ENCODE measurements at regions of chr6 and their contacts with region 1.

Region 1: GRCh38 chr6:11575408-11576033 is 38.0 kb downstream of the TMEM170B start:
- DNase-seq: peak in 4 of 5 donors; percentile 39 to 43 (median 40)
- H3K4me3 ChIP-seq: no peak overlapping the region
- H3K4me3 Mint-ChIP-seq: no peak overlapping the region
- H3K27ac ChIP-seq: no peak overlapping the region
- H3K27ac Mint-ChIP-seq: no peak overlapping the region
- H3K4me1 ChIP-seq: no peaks in the 10 kb centered on the region
- H3K4me1 Mint-ChIP-seq: no peaks in the 10 kb centered on the region
- H3K27me3 ChIP-seq: no peaks in the 10 kb centered on the region
- H3K27me3 Mint-ChIP-seq: no peaks in the 10 kb centered on the region

Region 2: DNA sequence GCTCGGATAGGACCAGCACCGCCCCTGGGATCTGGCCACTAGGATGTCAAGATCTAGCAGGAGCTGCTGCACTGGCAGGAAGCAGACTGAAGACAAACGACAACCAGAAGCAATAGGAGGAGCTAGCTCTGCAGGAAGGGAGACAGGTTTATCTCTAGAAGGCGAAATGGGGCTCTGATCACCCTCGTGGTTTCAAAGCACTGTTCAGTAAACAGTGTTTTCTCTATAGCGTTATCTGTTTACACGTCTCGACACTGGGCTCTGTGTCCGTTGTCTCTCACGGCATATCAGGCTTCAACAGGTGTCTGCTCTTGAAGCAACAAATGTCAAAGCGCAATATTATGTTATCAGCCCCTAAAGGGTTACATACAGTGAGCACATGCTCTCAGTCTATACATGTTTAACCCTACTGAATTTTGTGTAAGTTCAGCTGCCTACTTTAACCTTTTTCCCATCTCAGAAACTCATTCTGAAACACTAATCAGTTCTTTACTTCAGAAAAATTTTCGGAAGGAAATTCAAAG is 804.1 kb before region 1 on chr6:
- CTCF ChIA-PET with region 1: no interaction called
- POLR2A ChIA-PET with region 1: no interaction called
- intact Hi-C with region 1: no loop called
- DNase-seq: no peak
- H3K4me3 ChIP-seq: no peak overlapping the region
- H3K4me3 Mint-ChIP-seq: no peak overlapping the region
- H3K27ac ChIP-seq: no peak overlapping the region
- H3K27ac Mint-ChIP-seq: peak overlapping the region in 3 of 7 donors; percentile 15 to 70 (median 39)
- H3K4me1 ChIP-seq: no peaks in the 10 kb centered on the region
- H3K4me1 Mint-ChIP-seq: peaks cover 0 to 1% (median 0%) of the 10 kb centered on the region in 4 donors
- H3K27me3 ChIP-seq: no peaks in the 10 kb centered on the region
- H3K27me3 Mint-ChIP-seq: no peaks in the 10 kb centered on the region

Region 3: DNA sequence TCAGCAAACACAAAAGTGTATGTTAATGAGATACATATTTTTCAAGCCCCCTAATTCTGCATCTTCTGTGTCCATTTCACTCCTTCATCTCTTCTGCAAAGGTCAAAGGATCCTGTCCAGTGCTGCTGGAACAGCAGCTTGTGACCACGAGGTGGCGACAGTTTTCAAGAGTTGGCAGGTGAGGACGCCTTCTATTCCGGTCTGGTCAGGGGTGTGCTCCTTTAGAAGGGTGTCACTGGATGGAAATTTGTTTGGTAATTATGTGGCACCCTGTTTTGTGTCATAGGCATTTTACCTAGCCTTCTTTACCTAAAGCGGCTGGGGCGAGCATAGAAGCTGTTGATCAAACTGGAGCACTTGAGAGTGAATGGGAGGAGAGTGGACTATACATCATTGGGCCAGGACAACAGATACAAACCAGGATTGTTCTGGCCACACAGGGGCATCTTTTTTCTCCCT is 431.1 kb before region 1 on chr6:
- CTCF ChIA-PET with region 1: interaction called, 11 read pairs
- POLR2A ChIA-PET with region 1: no interaction called
- intact Hi-C with region 1: loop called (anchors 1 kb)
- DNase-seq: peak; percentile 54 to 68 (median 64)
- H3K4me3 ChIP-seq: no peak overlapping the region
- H3K4me3 Mint-ChIP-seq: no peak overlapping the region
- H3K27ac ChIP-seq: no peak overlapping the region
- H3K27ac Mint-ChIP-seq: no peak overlapping the region
- H3K4me1 ChIP-seq: no peaks in the 10 kb centered on the region
- H3K4me1 Mint-ChIP-seq: peaks cover 0 to 4% (median 0%) of the 10 kb centered on the region in 4 donors
- H3K27me3 ChIP-seq: no peaks in the 10 kb centered on the region
- H3K27me3 Mint-ChIP-seq: no peaks in the 10 kb centered on the region

Region 4: DNA sequence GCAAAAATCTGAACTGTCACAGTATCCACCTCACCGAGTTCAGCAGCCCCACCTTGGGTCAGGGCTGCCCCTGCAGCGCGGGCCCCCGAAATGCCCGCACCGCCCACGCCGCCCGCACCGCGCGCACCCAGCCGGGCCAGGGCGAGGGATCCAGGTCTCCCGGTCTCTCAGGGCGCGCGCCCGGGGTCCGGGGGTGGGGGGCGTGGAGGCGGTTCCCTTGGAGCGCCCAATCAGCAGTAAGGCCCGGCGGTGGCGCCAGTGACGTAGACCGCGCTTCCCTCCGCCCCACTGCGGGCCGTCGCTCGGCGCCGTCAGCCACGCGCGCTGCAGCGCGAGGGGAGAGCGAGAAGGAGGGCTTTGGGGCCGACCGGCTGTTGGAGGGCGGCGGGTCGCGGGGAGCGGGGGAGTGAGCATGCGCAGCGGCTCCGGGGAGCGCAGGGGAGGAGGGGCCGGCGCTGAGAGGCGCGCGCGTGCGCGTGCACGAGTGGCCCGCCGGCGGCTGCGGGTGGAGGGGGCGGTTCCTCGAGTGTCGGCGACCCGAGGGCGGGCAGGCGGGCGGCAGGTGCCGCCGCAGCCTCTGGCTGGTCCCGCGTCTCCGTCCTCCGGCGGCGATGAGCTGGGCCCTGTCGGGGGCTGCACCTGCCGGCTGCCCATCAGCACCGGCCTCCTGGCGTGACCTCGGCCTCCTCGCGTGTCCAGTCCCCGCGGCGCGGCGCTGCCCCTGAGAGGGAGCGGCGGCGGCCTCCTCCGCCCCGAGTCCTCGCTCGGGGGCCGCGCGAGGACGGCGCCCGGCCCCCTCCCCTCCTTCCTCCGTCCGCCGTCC is 38.1 kb before region 1 on chr6 and contains the start of gene TMEM170B:
- CTCF ChIA-PET with region 1: no interaction called
- POLR2A ChIA-PET with region 1: no interaction called
- intact Hi-C with region 1: loop called (anchors 1 kb)
- DNase-seq: peak; percentile 94 to 98 (median 97)
- H3K4me3 ChIP-seq: peak within 1 kb of the TSS; percentile 60 to 77
- H3K4me3 Mint-ChIP-seq: peak within 1 kb of the TSS; percentile 86 to 92 (median 90)
- H3K27ac ChIP-seq: peak within 1 kb of the TSS; percentile 54
- H3K27ac Mint-ChIP-seq: peak within 1 kb of the TSS; percentile 72 to 94 (median 92)
- H3K4me1 ChIP-seq: peaks cover 11% of the 10 kb centered on the region
- H3K4me1 Mint-ChIP-seq: peaks cover 7 to 24% (median 9%) of the 10 kb centered on the region in 4 donors
- H3K27me3 ChIP-seq: no peaks in the 10 kb centered on the region
- H3K27me3 Mint-ChIP-seq: peaks cover 2 to 4% of the 10 kb centered on the region in 2 donors
- total RNA-seq, gene TMEM170B: 1.9 to 2.1 TPM

Measured in CD4-positive, alpha-beta memory T cell (primary cell).